Spleen (tissue), 13 donors: ENCODE measurements at regions of chr16 and their contacts with region 1.

Region 1: GRCh38 chr16:70380861-70381603 is 34.3 kb downstream of the DDX19A start:
- DNase-seq: peak; percentile 96
- H3K4me3 ChIP-seq: peak overlapping the region; percentile 60 to 90 (median 80)
- H3K27ac ChIP-seq: peak overlapping the region; percentile 77 to 91 (median 88)
- H3K4me1 ChIP-seq: peaks cover 15 to 42% (median 29%) of the 10 kb centered on the region in 6 donors
- H3K27me3 ChIP-seq: no peaks in the 10 kb centered on the region
- CTCF ChIP-seq: peak in 6 of 11 experiments; percentile 4 to 47 (median 29)
- POLR2A ChIP-seq: peak in 2 of 3 donors; percentile 51 to 73

Region 2: GRCh38 chr16:70438969-70439862 is 58.2 kb after region 1 on chr16 and contains the start of gene ST3GAL2:
- intact Hi-C with region 1: loop called (anchors 10 kb)
- DNase-seq: peak; percentile 98
- H3K4me3 ChIP-seq: peak within 1 kb of the TSS; percentile 50 to 94 (median 76)
- H3K27ac ChIP-seq: peak within 1 kb of the TSS; percentile 36 to 92 (median 82)
- H3K4me1 ChIP-seq: peaks cover 15 to 55% (median 45%) of the 10 kb centered on the region in 6 donors
- H3K27me3 ChIP-seq: no peaks in the 10 kb centered on the region
- CTCF ChIP-seq: peak in 5 of 11 experiments; percentile 11 to 50 (median 34)
- POLR2A ChIP-seq: no peak
- total RNA-seq, gene ST3GAL2: 33.1 to 66.9 (median 48.1) TPM

Region 3: GRCh38 chr16:70661918-70662641 is 281.0 kb after region 1 on chr16:
- intact Hi-C with region 1: no loop called
- DNase-seq: no peak
- H3K4me3 ChIP-seq: no peak overlapping the region
- H3K27ac ChIP-seq: peak overlapping the region in 6 of 8 donors; percentile 3 to 73 (median 68)
- H3K4me1 ChIP-seq: peaks cover 0 to 52% (median 14%) of the 10 kb centered on the region in 6 donors
- H3K27me3 ChIP-seq: no peaks in the 10 kb centered on the region
- CTCF ChIP-seq: no peak
- POLR2A ChIP-seq: no peak